CD8-positive, alpha-beta T cell (primary cell): ENCODE measurements at regions of chr13 and their contacts with region 1.

Region 1: GRCh38 chr13:50357586-50358118 is 342.4 kb downstream of the KCNRG start:
- DNase-seq: no peak
- ATAC-seq: no peak
- H3K4me3 ChIP-seq: no peak overlapping the region
- H3K4me3 Mint-ChIP-seq: no peak overlapping the region
- H3K27ac ChIP-seq: no peak overlapping the region
- H3K27ac Mint-ChIP-seq: no peak overlapping the region
- H3K4me1 ChIP-seq: no peaks in the 10 kb centered on the region
- H3K4me1 Mint-ChIP-seq: peaks cover 33% of the 10 kb centered on the region
- H3K27me3 ChIP-seq: no peaks in the 10 kb centered on the region
- H3K27me3 Mint-ChIP-seq: no peaks in the 10 kb centered on the region
- CTCF ChIP-seq: no peak

Region 2: GRCh38 chr13:50309882-50310594 is 47.6 kb before region 1 on chr13:
- CTCF ChIA-PET with region 1: no interaction called
- POLR2A ChIA-PET with region 1: no interaction called
- intact Hi-C with region 1: loop called in 1 of 2 experiments (anchors 5 kb)
- DNase-seq: no peak
- ATAC-seq: no peak
- H3K4me3 ChIP-seq: no peak overlapping the region
- H3K4me3 Mint-ChIP-seq: no peak overlapping the region
- H3K27ac ChIP-seq: no peak overlapping the region
- H3K27ac Mint-ChIP-seq: no peak overlapping the region
- H3K4me1 ChIP-seq: peaks cover 3% of the 10 kb centered on the region
- H3K4me1 Mint-ChIP-seq: peaks cover 15% of the 10 kb centered on the region
- H3K27me3 ChIP-seq: no peaks in the 10 kb centered on the region
- H3K27me3 Mint-ChIP-seq: peaks cover 5% of the 10 kb centered on the region
- CTCF ChIP-seq: no peak

Region 3: GRCh38 chr13:50319635-50320255 is 37.9 kb before region 1 on chr13:
- CTCF ChIA-PET with region 1: no interaction called
- POLR2A ChIA-PET with region 1: no interaction called
- intact Hi-C with region 1: loop called (anchors 5 kb)
- DNase-seq: peak in 2 of 9 experiments; percentile 46 to 63
- ATAC-seq: peak; percentile 29
- H3K4me3 ChIP-seq: no peak overlapping the region
- H3K4me3 Mint-ChIP-seq: no peak overlapping the region
- H3K27ac ChIP-seq: peak overlapping the region in 1 of 2 experiments; percentile 50
- H3K27ac Mint-ChIP-seq: peak overlapping the region; percentile 85
- H3K4me1 ChIP-seq: peaks cover 26% of the 10 kb centered on the region
- H3K4me1 Mint-ChIP-seq: peaks cover 27% of the 10 kb centered on the region
- H3K27me3 ChIP-seq: no peaks in the 10 kb centered on the region
- H3K27me3 Mint-ChIP-seq: no peaks in the 10 kb centered on the region
- CTCF ChIP-seq: no peak

Region 4: DNA sequence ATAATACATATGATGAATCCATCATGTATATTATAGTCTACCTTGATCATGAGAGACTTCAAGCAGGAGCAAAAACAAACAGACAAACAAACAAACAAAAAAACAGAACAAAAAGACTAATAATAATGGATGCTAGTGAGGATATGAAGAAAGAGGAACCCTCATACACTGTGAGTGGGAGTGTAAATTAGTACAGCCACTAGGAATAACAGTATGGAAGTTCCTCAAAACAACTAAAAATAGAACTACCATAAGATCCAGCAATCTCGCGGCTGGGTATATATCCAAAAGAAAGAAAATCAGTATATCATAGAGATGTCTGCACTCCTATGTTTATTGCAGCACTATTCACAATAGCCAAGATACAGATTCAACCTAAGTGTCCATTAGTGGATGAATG is 492.8 kb after region 1 on chr13:
- CTCF ChIA-PET with region 1: no interaction called
- POLR2A ChIA-PET with region 1: no interaction called
- intact Hi-C with region 1: no loop called
- DNase-seq: no peak
- ATAC-seq: no peak
- H3K4me3 ChIP-seq: no peak overlapping the region
- H3K4me3 Mint-ChIP-seq: no peak overlapping the region
- H3K27ac ChIP-seq: no peak overlapping the region
- H3K27ac Mint-ChIP-seq: no peak overlapping the region
- H3K4me1 ChIP-seq: no peaks in the 10 kb centered on the region
- H3K4me1 Mint-ChIP-seq: peaks cover 16% of the 10 kb centered on the region
- H3K27me3 ChIP-seq: peaks cover 0 to 2% of the 10 kb centered on the region in 2 experiments
- H3K27me3 Mint-ChIP-seq: peaks cover 9% of the 10 kb centered on the region
- CTCF ChIP-seq: no peak